SK-N-SH (cell line): ENCODE measurements at regions of chr5 and their contacts with region 1.

Region 1: GRCh38 chr5:151924564-151925301 is at the start of gene GLRA1:
- DNase-seq: peak; percentile 45
- H3K4me3 ChIP-seq: no peak within 1 kb of the TSS; a peak in 1 of 4 replicates
- H3K27ac ChIP-seq: no peak within 1 kb of the TSS
- H3K4me1 ChIP-seq: peaks cover 0 to 3% of the 10 kb centered on the region in 2 experiments; a peak in 1 of 4 replicates
- H3K27me3 ChIP-seq: no peaks in the 10 kb centered on the region
- CTCF ChIP-seq: no peak
- EP300 ChIP-seq: no peak
- RAD21 ChIP-seq: no peak
- polyA plus RNA-seq, gene GLRA1: not detected in 2 replicates

Region 2: DNA sequence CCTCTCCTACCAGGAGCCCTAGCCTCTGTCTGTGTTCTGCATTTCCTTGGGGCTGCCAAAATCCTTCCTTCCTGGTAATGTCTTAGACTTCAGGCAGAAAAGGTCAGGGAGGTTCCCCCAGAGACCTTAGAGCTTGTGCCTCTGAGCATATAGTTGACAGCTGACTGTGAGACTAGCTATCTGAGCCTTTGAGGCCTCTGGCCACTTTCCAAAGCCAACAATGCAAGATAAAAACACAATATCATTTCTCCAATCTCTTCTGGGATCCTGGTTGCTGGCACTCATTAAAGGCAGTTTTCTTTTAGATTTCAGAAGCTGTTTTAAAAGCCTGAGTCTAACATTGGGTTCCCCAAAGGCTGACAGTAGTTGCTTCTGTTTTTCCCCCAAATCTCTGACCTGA is 13.1 kb after region 1 on chr5:
- CTCF ChIA-PET with region 1: interaction called, 22 read pairs
- POLR2A ChIA-PET with region 1: no interaction called
- DNase-seq: no peak
- H3K4me3 ChIP-seq: no peak overlapping the region
- H3K27ac ChIP-seq: no peak overlapping the region
- H3K4me1 ChIP-seq: no peaks in the 10 kb centered on the region
- H3K27me3 ChIP-seq: no peaks in the 10 kb centered on the region
- CTCF ChIP-seq: no peak
- EP300 ChIP-seq: no peak
- RAD21 ChIP-seq: no peak

Region 3: DNA sequence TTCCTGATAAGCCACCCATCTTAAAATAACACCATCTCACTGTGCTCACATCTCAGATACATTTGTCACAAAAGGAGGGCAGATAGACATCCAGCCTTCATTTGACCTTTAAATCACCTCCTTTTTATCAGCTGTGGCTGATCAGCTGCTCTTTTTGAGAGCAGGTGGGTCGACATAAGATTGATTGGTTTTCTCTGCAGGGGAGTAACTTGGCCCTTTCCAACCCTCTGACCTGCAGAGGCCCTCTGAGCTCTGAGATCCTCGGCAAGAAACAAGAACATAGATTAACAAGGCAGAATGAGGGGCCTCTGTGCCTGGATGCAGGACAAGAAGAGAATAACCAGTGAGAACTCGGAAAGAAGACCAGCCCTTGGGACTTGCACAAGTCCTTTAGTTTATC is 33.4 kb after region 1 on chr5:
- CTCF ChIA-PET with region 1: interaction called, 14 read pairs
- POLR2A ChIA-PET with region 1: no interaction called
- DNase-seq: no peak
- H3K4me3 ChIP-seq: no peak overlapping the region
- H3K27ac ChIP-seq: no peak overlapping the region
- H3K4me1 ChIP-seq: no peaks in the 10 kb centered on the region
- H3K27me3 ChIP-seq: no peaks in the 10 kb centered on the region; the same call in 1 of the 2 replicates
- CTCF ChIP-seq: no peak
- EP300 ChIP-seq: no peak
- RAD21 ChIP-seq: no peak

Region 4: DNA sequence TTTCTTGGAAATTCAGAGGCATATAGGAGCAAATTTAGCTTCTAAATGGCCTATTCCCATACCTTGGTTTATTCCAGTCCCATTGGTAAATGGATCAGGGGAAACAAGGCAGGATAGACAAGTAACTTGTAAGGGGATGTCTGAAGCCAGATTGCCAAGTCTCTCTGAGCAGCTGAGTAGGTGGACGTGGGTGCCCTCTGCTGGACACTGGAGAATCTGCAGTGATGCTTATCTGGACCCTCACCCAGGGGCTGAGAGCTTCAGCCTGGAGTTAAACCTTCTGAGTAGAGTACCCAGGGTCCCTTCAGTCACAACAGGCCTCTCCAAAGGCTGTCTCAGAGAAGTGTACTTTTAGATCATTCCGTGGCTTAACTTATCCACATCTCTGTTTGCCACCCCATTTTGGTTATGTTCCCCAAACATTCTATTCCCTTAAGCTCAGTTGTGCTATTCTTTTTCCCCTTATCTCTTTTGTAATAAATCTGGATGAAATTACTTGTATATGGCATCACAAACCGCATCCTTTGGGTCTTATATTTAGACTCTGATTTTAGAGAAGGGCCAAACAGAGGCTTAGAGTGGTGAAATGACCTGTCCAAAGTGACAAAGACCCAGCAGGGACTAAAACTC is 218.2 kb after region 1 on chr5:
- CTCF ChIA-PET with region 1: interaction called, 13 read pairs
- POLR2A ChIA-PET with region 1: no interaction called
- DNase-seq: peak; percentile 66
- H3K4me3 ChIP-seq: no peak overlapping the region
- H3K27ac ChIP-seq: no peak overlapping the region
- H3K4me1 ChIP-seq: no peaks in the 10 kb centered on the region
- H3K27me3 ChIP-seq: no peaks in the 10 kb centered on the region
- CTCF ChIP-seq: peak; percentile 90
- EP300 ChIP-seq: no peak
- RAD21 ChIP-seq: peak; percentile 77